H1 (cell line): ENCODE measurements at regions of chr6 and their contacts with region 1.

Region 1: GRCh38 chr6:31834434-31835198 is 7.1 kb downstream of the HSPA1B start:
- DNase-seq: peak in 1 of 2 experiments; percentile 89
- H3K4me3 ChIP-seq: peak overlapping the region; percentile 70 to 99 (median 92)
- H3K27ac ChIP-seq: peak overlapping the region; percentile 96
- H3K4me1 ChIP-seq: peaks cover 2 to 9% (median 6%) of the 10 kb centered on the region in 4 experiments; a peak in 5 of 7 replicates
- H3K27me3 ChIP-seq: no peaks in the 10 kb centered on the region
- CTCF ChIP-seq: no peak
- EP300 ChIP-seq: no peak; a peak in 1 of 3 replicates
- POLR2A ChIP-seq: peak; percentile 98 to 99
- RAD21 ChIP-seq: no peak

Region 2: DNA sequence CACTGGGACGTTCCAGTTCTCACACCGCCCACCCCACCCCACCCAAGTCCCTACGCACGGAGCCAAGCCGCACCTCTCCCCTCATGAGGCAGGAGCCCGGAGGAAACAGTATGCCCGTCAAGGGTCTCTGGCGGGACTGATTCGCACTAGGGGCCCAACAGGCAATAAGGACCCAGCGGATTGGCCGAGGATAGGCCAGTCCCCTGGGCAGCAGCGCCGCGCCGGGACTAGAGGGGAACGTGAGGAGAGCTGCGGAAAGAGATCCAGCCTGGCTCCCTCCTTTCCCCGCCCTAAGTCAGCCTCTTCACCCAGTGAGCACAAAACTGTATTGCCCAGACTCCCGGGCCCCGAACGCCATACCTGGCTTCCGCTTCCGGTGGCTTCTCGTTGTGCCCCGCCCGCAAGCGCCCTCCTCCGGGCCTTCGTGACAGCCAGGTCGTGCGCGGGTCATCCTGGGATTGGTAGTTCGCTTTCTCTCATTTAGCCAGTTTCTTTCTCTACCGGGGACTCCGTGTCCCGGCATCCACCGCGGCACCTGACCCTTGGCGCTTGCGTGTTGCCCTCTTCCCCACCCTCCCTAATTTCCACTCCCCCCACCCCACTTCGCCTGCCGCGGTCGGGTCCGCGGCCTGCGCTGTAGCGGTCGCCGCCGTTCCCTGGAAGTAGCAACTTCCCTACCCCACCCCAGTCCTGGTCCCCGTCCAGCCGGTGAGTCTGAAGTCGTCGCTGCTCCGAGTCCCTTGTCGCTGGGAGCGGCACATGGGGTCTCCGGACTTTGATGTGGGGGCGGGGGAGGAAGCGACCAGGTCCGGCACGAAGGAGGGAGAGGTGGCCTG is 168.9 kb before region 1 on chr6 and contains the start of gene CSNK2B:
- CTCF ChIA-PET with region 1: interaction called, 5 read pairs
- POLR2A ChIA-PET with region 1: interaction called, 12 read pairs
- DNase-seq: peak; percentile 88 to 91
- H3K4me3 ChIP-seq: peak within 1 kb of the TSS; percentile 88 to 94 (median 91)
- H3K27ac ChIP-seq: peak within 1 kb of the TSS; percentile 97
- H3K4me1 ChIP-seq: peaks cover 0 to 12% (median 4%) of the 10 kb centered on the region in 4 experiments; a peak in 5 of 7 replicates
- H3K27me3 ChIP-seq: no peaks in the 10 kb centered on the region
- CTCF ChIP-seq: no peak
- EP300 ChIP-seq: no peak
- POLR2A ChIP-seq: peak in 1 of 2 experiments; percentile 95; a peak in 2 of 3 replicates
- RAD21 ChIP-seq: no peak
- total RNA-seq, gene CSNK2B: 192 and 208 TPM in 2 replicates

Region 3: GRCh38 chr6:31795616-31796298 is 38.9 kb before region 1 on chr6 and contains the start of gene VARS1:
- CTCF ChIA-PET with region 1: interaction called, 27 read pairs
- POLR2A ChIA-PET with region 1: interaction called, 81 read pairs
- DNase-seq: peak in 1 of 2 experiments; percentile 96
- H3K4me3 ChIP-seq: peak within 1 kb of the TSS; percentile 82 to 95 (median 90)
- H3K27ac ChIP-seq: peak within 1 kb of the TSS; percentile 99
- H3K4me1 ChIP-seq: peaks cover 0 to 2% (median under 1%) of the 10 kb centered on the region in 4 experiments; a peak in 3 of 7 replicates
- H3K27me3 ChIP-seq: no peaks in the 10 kb centered on the region
- CTCF ChIP-seq: peak; percentile 92 to 99 (median 94)
- EP300 ChIP-seq: peak in 1 of 2 experiments; percentile 44; a peak in 1 of 3 replicates
- POLR2A ChIP-seq: peak in 1 of 2 experiments; percentile 72; a peak in 2 of 3 replicates
- RAD21 ChIP-seq: peak; percentile 71 to 79
- total RNA-seq, gene VARS1: 162 and 163 TPM in 2 replicates

Region 4: DNA sequence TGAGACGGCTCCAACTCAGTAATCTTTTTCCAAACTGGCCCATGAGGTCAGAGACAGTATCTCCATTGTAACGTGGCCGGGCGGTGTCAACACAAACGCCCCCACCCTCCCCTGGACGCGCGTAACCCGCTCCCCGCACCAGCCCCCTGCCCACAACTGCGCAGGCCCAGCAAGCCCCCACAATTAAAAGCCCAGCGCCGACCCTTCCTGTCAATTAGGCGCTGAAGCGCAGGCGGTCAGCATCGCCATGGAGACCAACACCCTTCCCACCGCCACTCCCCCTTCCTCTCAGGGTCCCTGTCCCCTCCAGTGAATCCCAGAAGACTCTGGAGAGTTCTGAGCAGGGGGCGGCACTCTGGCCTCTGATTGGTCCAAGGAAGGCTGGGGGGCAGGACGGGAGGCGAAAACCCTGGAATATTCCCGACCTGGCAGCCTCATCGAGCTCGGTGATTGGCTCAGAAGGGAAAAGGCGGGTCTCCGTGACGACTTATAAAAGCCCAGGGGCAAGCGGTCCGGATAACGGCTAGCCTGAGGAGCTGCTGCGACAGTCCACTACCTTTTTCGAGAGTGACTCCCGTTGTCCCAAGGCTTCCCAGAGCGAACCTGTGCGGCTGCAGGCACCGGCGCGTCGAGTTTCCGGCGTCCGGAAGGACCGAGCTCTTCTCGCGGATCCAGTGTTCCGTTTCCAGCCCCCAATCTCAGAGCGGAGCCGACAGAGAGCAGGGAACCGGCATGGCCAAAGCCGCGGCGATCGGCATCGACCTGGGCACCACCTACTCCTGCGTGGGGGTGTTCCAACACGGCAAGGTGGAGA is 19.4 kb before region 1 on chr6 and contains the starts of genes HSPA1A and HSPA1L:
- CTCF ChIA-PET with region 1: interaction called, 11 read pairs
- POLR2A ChIA-PET with region 1: interaction called, 136 read pairs
- DNase-seq: peak; percentile 91 to 93
- H3K4me3 ChIP-seq: peak within 1 kb of the TSS; percentile 54 to 77 (median 65)
- H3K27ac ChIP-seq: peak within 1 kb of the TSS; percentile 37; the same call in 1 of the 2 replicates
- H3K4me1 ChIP-seq: peaks cover 0 to 5% (median 3%) of the 10 kb centered on the region in 4 experiments; a peak in 5 of 7 replicates
- H3K27me3 ChIP-seq: no peaks in the 10 kb centered on the region
- CTCF ChIP-seq: no peak
- EP300 ChIP-seq: no peak
- POLR2A ChIP-seq: peak; percentile 97
- RAD21 ChIP-seq: no peak
- total RNA-seq, gene HSPA1A: 54.0 and 59.9 TPM in 2 replicates
- total RNA-seq, gene HSPA1L: 1.6 and 1.9 TPM in 2 replicates

Region 5: GRCh38 chr6:31862344-31863227 is 28.0 kb after region 1 on chr6 and contains the start of gene NEU1:
- CTCF ChIA-PET with region 1: interaction called, 5 read pairs
- POLR2A ChIA-PET with region 1: interaction called, 43 read pairs
- DNase-seq: peak; percentile 97 to 99
- H3K4me3 ChIP-seq: peak within 1 kb of the TSS; percentile 73 to 96 (median 78)
- H3K27ac ChIP-seq: peak within 1 kb of the TSS; percentile 31; the same call in 1 of the 2 replicates
- H3K4me1 ChIP-seq: peaks cover 0 to 12% (median 0%) of the 10 kb centered on the region in 4 experiments; a peak in 4 of 7 replicates
- H3K27me3 ChIP-seq: 0 out of 7 replicates have a peak, but pooled peaks cover 0 to 3% (median 0%) of the 10 kb centered on the region in 4 experiments
- CTCF ChIP-seq: no peak
- EP300 ChIP-seq: no peak
- POLR2A ChIP-seq: peak; percentile 79 to 90
- RAD21 ChIP-seq: no peak
- total RNA-seq, gene NEU1: 41.2 and 43.4 TPM in 2 replicates

Region 6: GRCh38 chr6:31935823-31936222 is 101.2 kb after region 1 on chr6:
- CTCF ChIA-PET with region 1: no interaction called
- POLR2A ChIA-PET with region 1: no interaction called
- DNase-seq: no peak
- H3K4me3 ChIP-seq: no peak overlapping the region
- H3K27ac ChIP-seq: no peak overlapping the region
- H3K4me1 ChIP-seq: 0 out of 7 replicates have a peak, but pooled peaks cover 0 to 2% (median 0%) of the 10 kb centered on the region in 4 experiments
- H3K27me3 ChIP-seq: no peaks in the 10 kb centered on the region
- CTCF ChIP-seq: no peak
- EP300 ChIP-seq: no peak
- POLR2A ChIP-seq: no peak
- RAD21 ChIP-seq: no peak

Region 7: GRCh38 chr6:31965700-31966099 is 131.1 kb after region 1 on chr6:
- CTCF ChIA-PET with region 1: no interaction called
- POLR2A ChIA-PET with region 1: no interaction called
- DNase-seq: no peak
- H3K4me3 ChIP-seq: no peak overlapping the region
- H3K27ac ChIP-seq: no peak overlapping the region
- H3K4me1 ChIP-seq: no peaks in the 10 kb centered on the region
- H3K27me3 ChIP-seq: no peaks in the 10 kb centered on the region
- CTCF ChIP-seq: no peak
- EP300 ChIP-seq: no peak
- POLR2A ChIP-seq: no peak
- RAD21 ChIP-seq: no peak